MCF 10A (cell line): ENCODE measurements at regions of chr2 and their contacts with region 1.

Region 1: GRCh38 chr2:44981136-44982108 is 27.8 kb downstream of the SIX2 start:
- DNase-seq: peak; percentile 75
- H3K4me3 Mint-ChIP-seq: no peak overlapping the region
- H3K27ac Mint-ChIP-seq: no peak overlapping the region
- H3K4me1 Mint-ChIP-seq: no peaks in the 10 kb centered on the region
- H3K27me3 Mint-ChIP-seq: no peaks in the 10 kb centered on the region
- CTCF ChIP-seq: peak; percentile 84

Region 2: DNA sequence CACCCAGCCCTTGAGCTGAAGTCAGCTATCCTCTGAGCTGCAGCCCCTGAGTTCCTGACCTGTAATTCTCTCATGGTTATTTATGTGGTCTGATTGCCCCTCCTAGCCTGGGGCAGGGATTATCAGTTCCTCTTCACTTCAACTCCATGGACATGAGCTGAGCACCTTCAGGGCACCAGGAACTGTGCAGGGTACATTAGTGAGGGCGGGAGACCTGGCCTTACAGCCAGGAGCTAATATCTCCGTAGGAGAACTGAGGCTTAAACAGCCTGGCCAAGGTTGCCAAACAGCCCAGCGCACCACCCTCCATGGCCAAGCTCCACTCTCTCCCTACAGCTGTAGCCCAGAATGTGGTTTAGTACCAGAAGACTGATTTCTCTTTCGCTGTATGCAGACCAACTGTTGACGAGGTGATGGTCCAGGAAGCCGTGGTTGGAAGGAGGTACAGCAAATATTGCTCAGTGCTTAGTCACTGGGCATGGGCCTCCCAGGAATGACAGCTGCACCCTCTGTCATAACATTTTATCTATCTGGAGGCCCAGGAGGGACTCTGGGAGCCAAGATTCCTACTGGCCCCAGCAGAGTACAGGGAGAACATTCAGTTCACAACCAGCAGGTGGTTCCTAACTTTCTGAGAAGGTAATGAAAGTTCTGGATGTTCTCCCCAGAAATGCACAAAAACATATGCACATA is 256.6 kb after region 1 on chr2:
- CTCF ChIA-PET with region 1: interaction called, 9 read pairs
- POLR2A ChIA-PET with region 1: no interaction called
- intact Hi-C with region 1: loop called (anchors 1 kb)
- DNase-seq: peak; percentile 96
- H3K4me3 Mint-ChIP-seq: peak overlapping the region; percentile 22
- H3K27ac Mint-ChIP-seq: peak overlapping the region; percentile 95
- H3K4me1 Mint-ChIP-seq: peaks cover 23% of the 10 kb centered on the region
- H3K27me3 Mint-ChIP-seq: no peaks in the 10 kb centered on the region
- CTCF ChIP-seq: peak; percentile 34

Region 3: GRCh38 chr2:45484965-45485364 is 503.5 kb after region 1 on chr2:
- CTCF ChIA-PET with region 1: interaction called, 21 read pairs
- POLR2A ChIA-PET with region 1: interaction called, 4 read pairs
- intact Hi-C with region 1: loop called (anchors 1 kb)
- DNase-seq: no peak
- H3K4me3 Mint-ChIP-seq: no peak overlapping the region
- H3K27ac Mint-ChIP-seq: no peak overlapping the region
- H3K4me1 Mint-ChIP-seq: no peaks in the 10 kb centered on the region
- H3K27me3 Mint-ChIP-seq: no peaks in the 10 kb centered on the region
- CTCF ChIP-seq: no peak

Region 4: GRCh38 chr2:45578056-45578809 is 596.8 kb after region 1 on chr2:
- CTCF ChIA-PET with region 1: no interaction called
- POLR2A ChIA-PET with region 1: no interaction called
- intact Hi-C with region 1: loop called (anchors 1 kb)
- DNase-seq: peak; percentile 43
- H3K4me3 Mint-ChIP-seq: no peak overlapping the region
- H3K27ac Mint-ChIP-seq: no peak overlapping the region
- H3K4me1 Mint-ChIP-seq: peaks cover 5% of the 10 kb centered on the region
- H3K27me3 Mint-ChIP-seq: no peaks in the 10 kb centered on the region
- CTCF ChIP-seq: no peak